ENCODE measurements at regions of chr6 and their contacts with region 1.

Region 1: GRCh38 chr6:16332175-16332542 is 93.8 kb downstream of the GMPR start:
- DNase-seq: peak; percentile 91
- ATAC-seq: peak; percentile 98
- H3K4me3 Mint-ChIP-seq: no peak overlapping the region
- H3K27ac Mint-ChIP-seq: no peak overlapping the region
- H3K4me1 Mint-ChIP-seq: no peaks in the 10 kb centered on the region
- H3K27me3 Mint-ChIP-seq: no peaks in the 10 kb centered on the region

Region 2: DNA sequence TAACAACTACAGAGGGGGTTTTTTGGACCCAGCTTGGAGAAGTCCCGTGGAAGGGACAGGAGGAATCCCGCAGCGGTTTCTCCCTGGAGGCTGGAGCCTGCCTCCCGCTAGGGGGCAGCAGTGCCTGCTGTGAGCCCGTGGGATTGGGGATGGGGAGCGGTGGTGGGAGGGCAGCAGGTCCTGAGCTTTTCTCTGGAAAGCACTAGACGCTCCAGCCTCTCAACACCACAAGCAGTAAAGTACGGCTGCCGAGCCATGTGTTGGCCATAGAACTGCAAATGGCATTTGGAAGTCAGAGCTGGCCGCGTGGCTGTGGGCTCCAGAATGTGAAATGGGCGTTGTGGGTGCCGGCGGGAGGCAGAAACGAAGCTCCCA is 46.0 kb before region 1 on chr6:
- CTCF ChIA-PET with region 1: interaction called, 3 read pairs
- POLR2A ChIA-PET with region 1: no interaction called
- intact Hi-C with region 1: loop called (anchors 1 to 2 kb)
- DNase-seq: peak; percentile 52
- ATAC-seq: no peak
- H3K4me3 Mint-ChIP-seq: no peak overlapping the region
- H3K27ac Mint-ChIP-seq: no peak overlapping the region
- H3K4me1 Mint-ChIP-seq: no peaks in the 10 kb centered on the region
- H3K27me3 Mint-ChIP-seq: no peaks in the 10 kb centered on the region

Region 3: DNA sequence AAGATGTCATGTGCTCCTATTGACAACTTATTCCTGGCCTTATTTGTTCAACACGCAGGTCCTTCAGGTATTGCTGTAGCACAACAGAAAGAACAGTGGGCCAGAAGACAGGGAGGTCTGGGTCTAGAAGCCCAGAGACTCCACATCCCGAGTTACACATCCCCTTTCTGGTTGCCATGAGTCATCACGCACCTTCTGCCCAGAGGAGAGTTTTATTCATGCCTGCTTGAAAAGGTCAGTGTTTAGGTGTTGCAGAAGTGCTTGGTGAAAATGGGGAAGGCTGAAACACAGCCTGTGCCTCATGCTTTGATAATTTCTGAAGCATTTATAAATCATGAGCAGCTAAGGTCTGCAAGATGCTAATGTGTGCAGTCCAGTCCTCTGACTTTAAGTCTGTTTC is 162.6 kb after region 1 on chr6:
- CTCF ChIA-PET with region 1: interaction called, 5 read pairs
- POLR2A ChIA-PET with region 1: no interaction called
- intact Hi-C with region 1: loop called in 1 of 2 experiments (anchors 5 kb)
- DNase-seq: no peak
- ATAC-seq: peak; percentile 50
- H3K4me3 Mint-ChIP-seq: no peak overlapping the region
- H3K27ac Mint-ChIP-seq: no peak overlapping the region
- H3K4me1 Mint-ChIP-seq: peaks cover 46% of the 10 kb centered on the region
- H3K27me3 Mint-ChIP-seq: no peaks in the 10 kb centered on the region

Region 4: DNA sequence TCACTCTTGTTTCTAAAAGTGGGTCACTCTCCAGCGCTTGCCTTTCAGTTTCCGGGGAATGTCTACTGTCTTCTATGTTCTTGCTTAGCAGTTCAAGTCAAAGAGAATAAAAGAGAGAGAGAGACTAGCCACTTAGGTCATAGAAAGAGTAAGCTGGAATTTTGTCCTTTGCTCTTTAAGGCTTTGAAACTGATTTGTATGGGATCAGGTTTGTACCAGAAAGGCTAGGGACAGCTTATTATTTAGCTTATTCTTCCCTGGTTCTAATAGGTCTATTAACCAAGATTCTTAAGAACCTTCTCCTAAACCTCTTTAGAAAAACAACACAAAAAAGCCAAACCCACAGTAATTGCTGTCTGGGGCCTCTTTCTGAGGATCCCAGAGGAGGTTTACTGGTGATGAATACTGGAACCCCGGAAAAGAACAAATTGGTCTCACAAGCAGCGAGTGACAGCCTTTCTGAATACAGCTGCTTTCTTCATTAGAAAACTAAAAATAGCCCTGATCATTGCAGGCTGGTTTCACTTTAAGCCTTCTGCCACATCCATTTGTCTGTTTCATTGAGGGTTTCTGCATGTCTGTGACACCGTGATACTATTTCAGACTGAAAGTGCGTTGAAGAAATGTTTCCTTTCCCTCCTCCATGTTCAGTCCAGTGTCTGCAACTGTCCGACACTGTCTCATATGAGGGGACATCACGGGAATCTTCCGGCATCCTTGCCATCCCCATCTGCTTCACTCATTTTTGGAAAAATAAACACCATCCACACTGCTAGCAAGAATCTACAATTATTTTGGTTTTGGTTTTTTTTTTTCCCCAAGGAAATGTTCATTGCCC is 504.2 kb after region 1 on chr6:
- CTCF ChIA-PET with region 1: interaction called, 3 read pairs
- POLR2A ChIA-PET with region 1: no interaction called
- intact Hi-C with region 1: loop called in 1 of 2 experiments (anchors 5 kb)
- DNase-seq: no peak
- ATAC-seq: peak; percentile 64
- H3K4me3 Mint-ChIP-seq: peak overlapping the region; percentile 5
- H3K27ac Mint-ChIP-seq: peak overlapping the region; percentile 63
- H3K4me1 Mint-ChIP-seq: peaks cover 36% of the 10 kb centered on the region
- H3K27me3 Mint-ChIP-seq: peaks cover 4% of the 10 kb centered on the region

Region 5: GRCh38 chr6:17086469-17086868 is 754.3 kb after region 1 on chr6:
- CTCF ChIA-PET with region 1: no interaction called
- POLR2A ChIA-PET with region 1: no interaction called
- intact Hi-C with region 1: loop called (anchors 1 to 10 kb)
- DNase-seq: peak; percentile 44
- ATAC-seq: no peak
- H3K4me3 Mint-ChIP-seq: no peak overlapping the region
- H3K27ac Mint-ChIP-seq: no peak overlapping the region
- H3K4me1 Mint-ChIP-seq: no peaks in the 10 kb centered on the region
- H3K27me3 Mint-ChIP-seq: peaks cover 24% of the 10 kb centered on the region